Activated naive CD4-positive, alpha-beta T cell treated with anti-CD3 and anti-CD28 coated beads for 36 hours (primary cell): ENCODE measurements at regions of chr5 and their contacts with region 1.

Region 1: GRCh38 chr5:102536323-102536928 is 37.6 kb upstream of the SLCO6A1 start:
- DNase-seq: no peak
- H3K4me3 Mint-ChIP-seq: no peak overlapping the region
- H3K27ac Mint-ChIP-seq: no peak overlapping the region
- H3K4me1 Mint-ChIP-seq: no peaks in the 10 kb centered on the region
- H3K27me3 Mint-ChIP-seq: peaks cover 4% of the 10 kb centered on the region

Region 2: GRCh38 chr5:100722657-100723056 is 1813.8 kb before region 1 on chr5:
- CTCF ChIA-PET with region 1: no interaction called
- intact Hi-C with region 1: no loop called
- DNase-seq: no peak
- H3K4me3 Mint-ChIP-seq: no peak overlapping the region
- H3K27ac Mint-ChIP-seq: no peak overlapping the region
- H3K4me1 Mint-ChIP-seq: no peaks in the 10 kb centered on the region
- H3K27me3 Mint-ChIP-seq: no peaks in the 10 kb centered on the region

Region 3: GRCh38 chr5:102670224-102670836 is 133.9 kb after region 1 on chr5:
- CTCF ChIA-PET with region 1: no interaction called
- intact Hi-C with region 1: loop called (anchors 1 kb)
- DNase-seq: peak; percentile 17
- H3K4me3 Mint-ChIP-seq: no peak overlapping the region
- H3K27ac Mint-ChIP-seq: no peak overlapping the region
- H3K4me1 Mint-ChIP-seq: no peaks in the 10 kb centered on the region
- H3K27me3 Mint-ChIP-seq: peaks cover 11% of the 10 kb centered on the region

Region 4: GRCh38 chr5:102792705-102793104 is 256.3 kb after region 1 on chr5:
- CTCF ChIA-PET with region 1: no interaction called
- intact Hi-C with region 1: loop called (anchors 1 kb)
- DNase-seq: no peak
- H3K4me3 Mint-ChIP-seq: no peak overlapping the region
- H3K27ac Mint-ChIP-seq: no peak overlapping the region
- H3K4me1 Mint-ChIP-seq: peaks cover 20% of the 10 kb centered on the region
- H3K27me3 Mint-ChIP-seq: no peaks in the 10 kb centered on the region

Region 5: GRCh38 chr5:103041071-103041676 is 504.7 kb after region 1 on chr5:
- CTCF ChIA-PET with region 1: interaction called, 5 read pairs
- intact Hi-C with region 1: loop called (anchors 1 kb)
- DNase-seq: no peak
- H3K4me3 Mint-ChIP-seq: no peak overlapping the region
- H3K27ac Mint-ChIP-seq: no peak overlapping the region
- H3K4me1 Mint-ChIP-seq: no peaks in the 10 kb centered on the region
- H3K27me3 Mint-ChIP-seq: no peaks in the 10 kb centered on the region

Region 6: GRCh38 chr5:103224118-103224893 is 687.9 kb after region 1 on chr5:
- CTCF ChIA-PET with region 1: interaction called, 4 read pairs
- intact Hi-C with region 1: loop called (anchors 1 kb)
- DNase-seq: peak; percentile 44
- H3K4me3 Mint-ChIP-seq: no peak overlapping the region
- H3K27ac Mint-ChIP-seq: no peak overlapping the region
- H3K4me1 Mint-ChIP-seq: no peaks in the 10 kb centered on the region
- H3K27me3 Mint-ChIP-seq: peaks cover 15% of the 10 kb centered on the region

Region 7: DNA sequence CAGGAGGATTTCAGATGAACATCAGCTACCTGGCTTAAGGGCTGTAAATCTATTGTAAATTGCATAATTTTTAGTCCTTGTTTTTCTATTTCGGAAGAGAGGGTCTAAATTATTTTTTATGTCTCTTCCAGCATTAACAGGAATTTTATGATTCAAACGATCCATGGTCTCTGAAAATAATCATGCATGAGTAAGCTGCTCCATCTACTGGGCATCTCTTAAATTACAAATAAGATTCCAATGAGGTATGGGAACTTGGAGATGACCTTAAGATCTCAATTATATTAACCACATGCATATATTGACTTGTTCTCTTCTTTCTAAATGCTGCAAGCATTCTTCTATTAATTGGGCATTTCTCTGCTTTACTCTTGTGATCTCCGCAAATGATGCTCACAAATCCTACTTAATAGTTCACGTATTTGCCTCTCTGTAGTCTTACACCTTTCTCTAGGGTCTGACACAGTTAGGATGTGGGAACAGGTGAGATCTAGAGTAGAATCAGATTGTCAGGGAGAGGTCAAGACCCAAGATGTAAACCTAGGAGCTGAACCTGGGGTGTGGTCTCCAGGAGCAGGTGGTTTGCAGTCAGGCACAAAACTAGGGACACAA is 939.3 kb after region 1 on chr5:
- CTCF ChIA-PET with region 1: interaction called, 3 read pairs
- intact Hi-C with region 1: loop called (anchors 5 kb)
- DNase-seq: no peak
- H3K4me3 Mint-ChIP-seq: no peak overlapping the region
- H3K27ac Mint-ChIP-seq: no peak overlapping the region
- H3K4me1 Mint-ChIP-seq: no peaks in the 10 kb centered on the region
- H3K27me3 Mint-ChIP-seq: no peaks in the 10 kb centered on the region